SK-N-SH (cell line): ENCODE measurements at regions of chr17 and their contacts with region 1.

Region 1: GRCh38 chr17:5486204-5487124 is at the start of gene MIS12:
- DNase-seq: peak; percentile 98
- H3K4me3 ChIP-seq: peak within 1 kb of the TSS; percentile 93 to 99
- H3K27ac ChIP-seq: peak within 1 kb of the TSS; percentile 98
- H3K4me1 ChIP-seq: peaks cover 15 to 16% of the 10 kb centered on the region in 2 experiments; a peak in 3 of 4 replicates
- H3K27me3 ChIP-seq: no peaks in the 10 kb centered on the region
- CTCF ChIP-seq: no peak
- EP300 ChIP-seq: no peak; a peak in 1 of 4 replicates
- RAD21 ChIP-seq: no peak
- polyA plus RNA-seq, gene MIS12: 9.3 and 12.4 TPM in 2 replicates

Region 2: GRCh38 chr17:5468075-5468473 is 18.4 kb before region 1 on chr17:
- CTCF ChIA-PET with region 1: interaction called, 7 read pairs
- POLR2A ChIA-PET with region 1: interaction called, 35 read pairs
- DNase-seq: peak; percentile 36
- H3K4me3 ChIP-seq: peak overlapping the region; percentile 88 to 98
- H3K27ac ChIP-seq: peak overlapping the region; percentile 63 to 74
- H3K4me1 ChIP-seq: peaks cover 0 to 13% of the 10 kb centered on the region in 2 experiments; a peak in 2 of 4 replicates
- H3K27me3 ChIP-seq: no peaks in the 10 kb centered on the region
- CTCF ChIP-seq: no peak
- EP300 ChIP-seq: no peak
- RAD21 ChIP-seq: no peak

Region 3: GRCh38 chr17:5500589-5501391 is 14.3 kb after region 1 on chr17:
- CTCF ChIA-PET with region 1: interaction called, 7 read pairs
- POLR2A ChIA-PET with region 1: interaction called, 46 read pairs
- DNase-seq: peak; percentile 99
- H3K4me3 ChIP-seq: peak overlapping the region; percentile 65 to 78
- H3K27ac ChIP-seq: peak overlapping the region; percentile 70 to 83
- H3K4me1 ChIP-seq: peaks cover 0 to 10% of the 10 kb centered on the region in 2 experiments; a peak in 2 of 4 replicates
- H3K27me3 ChIP-seq: no peaks in the 10 kb centered on the region
- CTCF ChIP-seq: no peak
- EP300 ChIP-seq: no peak
- RAD21 ChIP-seq: 0 out of 2 replicates have a peak, but pooled peaks have one; percentile 9